Upper lobe of right lung (tissue), 1 donor: ENCODE measurements at regions of chr7 and their contacts with region 1.

Region 1: GRCh38 chr7:51366930-51367613 is 50.5 kb upstream of the COBL start:
- DNase-seq: no peak
- ATAC-seq: peak; percentile 90
- H3K4me3 ChIP-seq: no peak overlapping the region
- H3K27ac ChIP-seq: no peak overlapping the region
- H3K4me1 ChIP-seq: no peaks in the 10 kb centered on the region
- H3K27me3 ChIP-seq: no peaks in the 10 kb centered on the region
- CTCF ChIP-seq: peak; percentile 72

Region 2: DNA sequence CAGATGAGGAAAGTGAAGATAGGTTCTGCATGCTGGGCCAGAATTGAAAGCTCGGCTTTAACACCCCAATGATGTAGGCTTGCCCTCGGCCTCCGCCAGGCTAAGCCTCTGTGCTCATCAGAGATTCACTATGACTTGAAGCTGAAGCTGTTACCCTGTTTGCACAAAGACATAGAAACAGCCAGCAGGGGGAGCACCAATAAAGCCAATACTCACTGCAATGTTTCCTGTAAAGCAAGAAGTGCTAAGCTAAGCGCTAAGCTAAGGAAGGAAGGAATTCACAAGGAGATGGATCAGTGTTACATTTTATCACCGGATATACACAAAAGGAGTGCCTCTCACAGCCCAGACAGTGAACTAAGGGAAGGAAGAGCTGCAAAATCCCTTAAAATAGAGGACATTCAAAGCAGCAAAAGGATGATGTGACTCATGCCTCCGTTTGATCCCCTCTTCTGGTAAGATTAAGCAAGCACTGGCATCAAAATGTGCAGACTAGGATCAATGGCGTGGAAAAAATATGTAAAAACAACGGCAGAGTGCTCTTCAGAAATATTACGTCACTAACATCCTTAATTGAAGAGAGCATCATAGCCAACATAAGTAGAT is 204.2 kb before region 1 on chr7:
- intact Hi-C with region 1: loop called (anchors 10 kb)
- DNase-seq: no peak
- ATAC-seq: peak; percentile 95
- H3K4me3 ChIP-seq: no peak overlapping the region
- H3K27ac ChIP-seq: no peak overlapping the region
- H3K4me1 ChIP-seq: peaks cover 7% of the 10 kb centered on the region
- H3K27me3 ChIP-seq: no peaks in the 10 kb centered on the region
- CTCF ChIP-seq: peak; percentile 85